H1 (cell line): ENCODE measurements at regions of chr9 and their contacts with region 1.

Region 1: DNA sequence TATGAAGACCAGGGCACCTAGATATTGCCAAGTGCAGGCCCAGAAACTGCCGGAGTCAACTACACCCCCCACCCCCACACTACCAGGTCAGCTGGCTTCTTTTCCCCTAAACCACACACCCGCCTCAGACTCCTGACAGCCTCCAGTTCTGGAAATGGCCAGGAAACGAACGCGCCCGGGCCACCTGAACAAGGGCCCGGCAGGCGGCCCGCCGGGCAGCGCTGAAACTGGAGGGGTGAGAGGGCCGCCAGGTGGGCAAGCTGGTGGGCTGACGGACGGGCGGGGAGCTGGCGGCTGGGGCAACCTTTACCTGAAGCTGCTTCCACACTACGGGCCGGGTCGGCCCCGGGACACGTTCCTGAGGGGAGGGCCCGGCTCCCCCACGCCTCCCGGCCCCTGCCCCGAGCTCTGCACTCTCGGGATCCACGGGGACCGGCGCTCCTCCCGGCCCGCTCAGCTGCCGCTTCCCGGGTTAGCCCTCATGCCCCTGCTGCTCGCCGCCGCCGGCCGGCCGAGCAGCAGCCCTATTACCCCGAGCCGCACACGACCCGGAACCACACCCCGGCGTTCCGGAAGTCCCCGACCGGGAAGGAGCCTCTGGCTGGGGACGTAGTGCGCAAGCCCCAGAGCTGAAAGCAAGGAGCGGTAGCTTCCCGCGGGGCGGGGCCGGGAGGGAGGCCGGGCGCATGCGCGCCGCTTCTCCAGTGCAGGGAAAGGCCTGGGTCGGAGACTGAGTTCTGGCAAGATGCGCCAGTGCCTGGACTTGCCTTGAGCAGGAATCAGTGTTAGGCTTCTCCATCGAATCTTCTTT is at the start of gene MAPKAP1:
- DNase-seq: peak; percentile 91 to 97
- H3K4me3 ChIP-seq: peak within 1 kb of the TSS; percentile 79 to 93 (median 82)
- H3K27ac ChIP-seq: peak within 1 kb of the TSS; percentile 74; the same call in 1 of the 2 replicates
- H3K4me1 ChIP-seq: peaks cover 0 to 5% (median under 1%) of the 10 kb centered on the region in 4 experiments; a peak in 5 of 7 replicates
- H3K27me3 ChIP-seq: no peaks in the 10 kb centered on the region
- CTCF ChIP-seq: no peak
- EP300 ChIP-seq: no peak
- POLR2A ChIP-seq: peak in 1 of 2 experiments; percentile 87; a peak in 2 of 3 replicates
- RAD21 ChIP-seq: peak in 1 of 2 experiments; percentile 6; a peak in 1 of 4 replicates
- total RNA-seq, gene MAPKAP1: 140 and 146 TPM in 2 replicates

Region 2: GRCh38 chr9:125659954-125660353 is 46.9 kb before region 1 on chr9:
- CTCF ChIA-PET with region 1: no interaction called
- POLR2A ChIA-PET with region 1: no interaction called
- DNase-seq: no peak
- H3K4me3 ChIP-seq: no peak overlapping the region
- H3K27ac ChIP-seq: no peak overlapping the region
- H3K4me1 ChIP-seq: peaks cover 3 to 14% (median 6%) of the 10 kb centered on the region in 4 experiments; a peak in 4 of 7 replicates
- H3K27me3 ChIP-seq: no peaks in the 10 kb centered on the region
- CTCF ChIP-seq: no peak
- EP300 ChIP-seq: no peak
- POLR2A ChIP-seq: no peak
- RAD21 ChIP-seq: no peak

Region 3: DNA sequence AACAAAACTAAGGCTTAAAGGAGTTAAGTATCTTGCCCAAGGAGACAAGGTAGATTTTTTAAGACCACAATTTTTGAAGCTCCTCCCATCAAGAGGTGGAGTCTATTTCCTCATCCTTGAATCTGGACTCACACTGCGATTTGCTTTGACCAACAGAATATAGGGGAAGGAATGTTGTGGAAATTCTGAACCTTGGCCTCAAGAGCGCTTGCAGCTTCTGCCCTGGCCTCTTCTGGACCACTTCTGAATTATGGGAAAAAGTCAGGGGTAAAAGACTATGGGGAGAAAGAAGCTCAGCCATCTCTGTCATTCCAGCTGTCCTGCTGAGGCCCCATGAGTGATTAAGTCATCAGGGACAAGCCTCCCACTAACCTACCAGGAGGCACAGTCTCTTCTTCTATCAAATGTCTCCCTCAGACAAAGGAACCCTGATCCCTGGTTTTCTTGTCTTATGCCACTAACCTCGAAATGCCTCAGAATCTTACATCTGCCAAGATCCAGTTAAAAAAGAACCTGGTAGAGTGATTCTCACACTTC is 25.7 kb before region 1 on chr9:
- CTCF ChIA-PET with region 1: interaction called, 3 read pairs
- POLR2A ChIA-PET with region 1: interaction called, 10 read pairs
- DNase-seq: no peak
- H3K4me3 ChIP-seq: no peak overlapping the region
- H3K27ac ChIP-seq: no peak overlapping the region
- H3K4me1 ChIP-seq: peaks cover 3 to 6% (median 3%) of the 10 kb centered on the region in 4 experiments; a peak in 2 of 7 replicates
- H3K27me3 ChIP-seq: no peaks in the 10 kb centered on the region
- CTCF ChIP-seq: no peak
- EP300 ChIP-seq: no peak
- POLR2A ChIP-seq: no peak
- RAD21 ChIP-seq: no peak

Region 4: GRCh38 chr9:125694478-125694877 is 12.4 kb before region 1 on chr9:
- CTCF ChIA-PET with region 1: no interaction called
- POLR2A ChIA-PET with region 1: interaction called, 10 read pairs
- DNase-seq: peak in 1 of 2 experiments; percentile 14
- H3K4me3 ChIP-seq: peak overlapping the region in 1 of 4 experiments; percentile 7; a peak in 1 of 8 replicates
- H3K27ac ChIP-seq: no peak overlapping the region
- H3K4me1 ChIP-seq: peaks cover 0 to 5% (median 4%) of the 10 kb centered on the region in 4 experiments; a peak in 6 of 7 replicates
- H3K27me3 ChIP-seq: peaks cover 0 to 2% (median 0%) of the 10 kb centered on the region in 4 experiments; a peak in 1 of 7 replicates
- CTCF ChIP-seq: no peak
- EP300 ChIP-seq: no peak
- POLR2A ChIP-seq: no peak
- RAD21 ChIP-seq: no peak

Region 5: DNA sequence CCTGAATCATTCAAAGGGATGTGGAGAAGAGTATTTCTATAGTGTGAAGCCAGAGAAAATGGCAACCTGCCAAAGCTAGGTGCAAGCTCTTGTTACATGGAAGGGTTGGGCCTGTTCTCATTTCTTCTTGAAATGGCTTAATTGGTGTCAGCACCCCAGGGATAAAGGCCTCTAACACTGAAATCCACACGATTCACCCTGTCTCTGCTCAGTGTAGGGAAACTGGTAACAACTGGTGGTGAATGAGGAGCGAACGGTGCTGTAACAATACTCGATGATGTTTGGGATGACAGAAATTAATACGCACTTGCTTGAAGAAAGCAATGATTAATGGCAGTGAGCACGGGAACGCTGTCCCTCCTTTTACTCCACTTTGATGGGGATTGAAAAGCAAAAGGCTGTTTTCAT is 56.5 kb after region 1 on chr9:
- CTCF ChIA-PET with region 1: no interaction called
- POLR2A ChIA-PET with region 1: no interaction called
- DNase-seq: no peak
- H3K4me3 ChIP-seq: no peak overlapping the region
- H3K27ac ChIP-seq: no peak overlapping the region
- H3K4me1 ChIP-seq: peaks cover 4 to 24% (median 16%) of the 10 kb centered on the region in 4 experiments; a peak in 6 of 7 replicates
- H3K27me3 ChIP-seq: no peaks in the 10 kb centered on the region
- CTCF ChIP-seq: no peak
- EP300 ChIP-seq: no peak
- POLR2A ChIP-seq: no peak
- RAD21 ChIP-seq: no peak